Breast epithelium (tissue), 4 donors: ENCODE measurements at regions of chr6 and their contacts with region 1.

Region 1: GRCh38 chr6:142400495-142400894 is 98.7 kb downstream of the ADGRG6 start:
- DNase-seq: no peak
- H3K4me3 ChIP-seq: no peak overlapping the region
- H3K27ac ChIP-seq: no peak overlapping the region
- H3K4me1 ChIP-seq: no peaks in the 10 kb centered on the region
- H3K27me3 ChIP-seq: no peaks in the 10 kb centered on the region
- CTCF ChIP-seq: no peak
- POLR2A ChIP-seq: no peak

Region 2: GRCh38 chr6:142975365-142975764 is 574.9 kb after region 1 on chr6:
- intact Hi-C with region 1: loop called (anchors 5 kb)
- DNase-seq: no peak
- H3K4me3 ChIP-seq: no peak overlapping the region
- H3K27ac ChIP-seq: no peak overlapping the region
- H3K4me1 ChIP-seq: no peaks in the 10 kb centered on the region
- H3K27me3 ChIP-seq: no peaks in the 10 kb centered on the region
- CTCF ChIP-seq: no peak
- POLR2A ChIP-seq: no peak

Region 3: GRCh38 chr6:143806282-143807102 is 1406.0 kb after region 1 on chr6:
- intact Hi-C with region 1: no loop called
- DNase-seq: no peak
- H3K4me3 ChIP-seq: no peak overlapping the region
- H3K27ac ChIP-seq: no peak overlapping the region
- H3K4me1 ChIP-seq: no peaks in the 10 kb centered on the region
- H3K27me3 ChIP-seq: no peaks in the 10 kb centered on the region
- CTCF ChIP-seq: no peak
- POLR2A ChIP-seq: no peak